ENCODE measurements at regions of chr15 and their contacts with region 1.

Region 1: DNA sequence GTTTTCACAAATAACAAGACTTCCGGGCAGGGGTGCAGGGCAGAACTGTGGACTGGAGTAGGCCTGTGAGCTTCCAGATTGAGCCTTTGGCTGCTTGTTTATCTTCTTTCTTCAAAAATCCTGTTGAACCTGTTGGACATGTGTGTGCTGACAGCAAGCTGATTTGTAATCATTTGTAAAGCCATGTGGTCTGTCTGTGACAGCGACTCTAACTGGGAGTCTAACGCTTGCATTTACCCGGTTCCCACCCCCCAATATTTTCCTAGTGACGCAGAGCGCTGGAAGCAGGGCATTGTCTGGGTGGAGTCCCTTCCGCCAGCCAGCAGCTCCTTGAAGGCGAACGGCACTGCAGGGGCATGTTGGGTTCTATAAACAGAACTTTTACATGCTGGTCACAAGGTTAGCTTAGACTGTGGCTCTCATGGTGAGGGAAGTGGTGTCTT is 85.7 kb upstream of the MYZAP start:
- DNase-seq: peak; percentile 85 to 96
- H3K4me3 ChIP-seq: no peak overlapping the region; the same call in 1 of the 2 replicates
- H3K27ac ChIP-seq: peak overlapping the region; percentile 83
- H3K4me1 ChIP-seq: peaks cover 52% of the 10 kb centered on the region
- H3K27me3 ChIP-seq: no peaks in the 10 kb centered on the region
- CTCF ChIP-seq: no peak

Region 2: GRCh38 chr15:56160966-56161365 is 1345.0 kb before region 1 on chr15:
- CTCF ChIA-PET with region 1: no interaction called
- POLR2A ChIA-PET with region 1: no interaction called
- intact Hi-C with region 1: no loop called
- DNase-seq: no peak
- H3K4me3 ChIP-seq: no peak overlapping the region
- H3K27ac ChIP-seq: peak overlapping the region; percentile 47
- H3K4me1 ChIP-seq: 0 out of 2 replicates have a peak, but pooled peaks cover 7% of the 10 kb centered on the region
- H3K27me3 ChIP-seq: no peaks in the 10 kb centered on the region
- CTCF ChIP-seq: no peak

Region 3: DNA sequence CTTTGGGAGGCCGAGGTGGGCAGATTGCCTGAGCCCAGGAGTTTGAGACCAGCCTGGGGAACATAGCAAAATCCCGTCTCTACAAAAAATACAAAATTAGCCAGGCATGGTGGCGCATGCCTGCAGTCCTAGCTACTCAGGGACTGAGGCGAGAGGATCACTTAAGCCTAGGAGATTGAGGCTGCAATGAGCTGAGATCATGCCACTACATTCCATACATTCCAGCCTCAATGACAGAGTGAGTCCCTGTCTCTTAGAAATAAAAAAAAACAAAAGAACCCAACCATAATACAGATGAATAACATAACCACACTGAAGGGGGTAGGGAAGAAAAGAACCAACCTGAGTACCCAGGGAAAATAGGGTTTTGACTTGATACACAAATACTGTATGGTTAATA is 149.3 kb before region 1 on chr15:
- CTCF ChIA-PET with region 1: no interaction called
- POLR2A ChIA-PET with region 1: no interaction called
- intact Hi-C with region 1: loop called (anchors 5 kb)
- DNase-seq: peak in 1 of 2 experiments; percentile 9
- H3K4me3 ChIP-seq: no peak overlapping the region
- H3K27ac ChIP-seq: no peak overlapping the region
- H3K4me1 ChIP-seq: no peaks in the 10 kb centered on the region
- H3K27me3 ChIP-seq: no peaks in the 10 kb centered on the region
- CTCF ChIP-seq: no peak

Region 4: GRCh38 chr15:57440799-57441198 is 65.2 kb before region 1 on chr15:
- CTCF ChIA-PET with region 1: no interaction called
- POLR2A ChIA-PET with region 1: interaction called, 4 read pairs
- intact Hi-C with region 1: loop called (anchors 10 kb)
- DNase-seq: peak in 1 of 2 experiments; percentile 47
- H3K4me3 ChIP-seq: no peak overlapping the region
- H3K27ac ChIP-seq: no peak overlapping the region
- H3K4me1 ChIP-seq: peaks cover 7% of the 10 kb centered on the region
- H3K27me3 ChIP-seq: no peaks in the 10 kb centered on the region
- CTCF ChIP-seq: no peak

Region 5: GRCh38 chr15:57485869-57486268 is 20.1 kb before region 1 on chr15:
- CTCF ChIA-PET with region 1: interaction called, 3 read pairs
- POLR2A ChIA-PET with region 1: no interaction called
- intact Hi-C with region 1: loop called (anchors 1 kb)
- DNase-seq: peak; percentile 85 to 93
- H3K4me3 ChIP-seq: no peak overlapping the region
- H3K27ac ChIP-seq: peak overlapping the region; percentile 45
- H3K4me1 ChIP-seq: peaks cover 20% of the 10 kb centered on the region
- H3K27me3 ChIP-seq: no peaks in the 10 kb centered on the region
- CTCF ChIP-seq: no peak

Region 6: DNA sequence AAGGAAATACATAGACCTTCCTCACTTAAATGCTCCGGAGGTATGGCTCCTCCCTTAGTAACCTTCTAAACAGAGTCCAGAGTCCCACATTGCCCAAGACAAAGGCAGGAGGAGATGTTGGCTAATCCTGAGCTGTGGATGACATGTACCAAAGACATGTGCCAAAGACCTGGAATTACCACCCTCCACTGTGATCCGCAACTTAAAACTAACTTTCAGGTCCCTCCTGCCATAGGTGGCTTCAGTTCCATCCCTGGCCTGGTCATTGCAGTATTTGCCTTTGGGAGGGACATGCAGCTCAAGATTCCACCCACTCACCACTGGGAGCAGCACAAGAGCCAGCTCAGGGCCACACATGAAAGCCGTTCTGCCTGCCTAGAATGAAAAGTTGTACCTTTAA is 113.8 kb after region 1 on chr15:
- CTCF ChIA-PET with region 1: no interaction called
- POLR2A ChIA-PET with region 1: no interaction called
- intact Hi-C with region 1: no loop called
- DNase-seq: no peak
- H3K4me3 ChIP-seq: no peak overlapping the region
- H3K27ac ChIP-seq: no peak overlapping the region
- H3K4me1 ChIP-seq: no peaks in the 10 kb centered on the region
- H3K27me3 ChIP-seq: no peaks in the 10 kb centered on the region
- CTCF ChIP-seq: no peak

Region 7: GRCh38 chr15:58510715-58511598 is 1005.0 kb after region 1 on chr15:
- CTCF ChIA-PET with region 1: no interaction called
- POLR2A ChIA-PET with region 1: no interaction called
- intact Hi-C with region 1: no loop called
- DNase-seq: no peak
- H3K4me3 ChIP-seq: no peak overlapping the region
- H3K27ac ChIP-seq: no peak overlapping the region
- H3K4me1 ChIP-seq: peaks cover 10% of the 10 kb centered on the region
- H3K27me3 ChIP-seq: no peaks in the 10 kb centered on the region
- CTCF ChIP-seq: no peak

Measured in PC-9 (cell line).